ENCODE measurements at regions of chr12 and their contacts with region 1.

Region 1: GRCh38 chr12:9634177-9634803 is 26.6 kb upstream of the KLRB1 start:
- DNase-seq: peak; percentile 87
- H3K4me3 Mint-ChIP-seq: no peak overlapping the region
- H3K27ac Mint-ChIP-seq: peak overlapping the region; percentile 4
- H3K4me1 Mint-ChIP-seq: peaks cover 66% of the 10 kb centered on the region
- H3K27me3 Mint-ChIP-seq: peaks cover 4% of the 10 kb centered on the region

Region 2: DNA sequence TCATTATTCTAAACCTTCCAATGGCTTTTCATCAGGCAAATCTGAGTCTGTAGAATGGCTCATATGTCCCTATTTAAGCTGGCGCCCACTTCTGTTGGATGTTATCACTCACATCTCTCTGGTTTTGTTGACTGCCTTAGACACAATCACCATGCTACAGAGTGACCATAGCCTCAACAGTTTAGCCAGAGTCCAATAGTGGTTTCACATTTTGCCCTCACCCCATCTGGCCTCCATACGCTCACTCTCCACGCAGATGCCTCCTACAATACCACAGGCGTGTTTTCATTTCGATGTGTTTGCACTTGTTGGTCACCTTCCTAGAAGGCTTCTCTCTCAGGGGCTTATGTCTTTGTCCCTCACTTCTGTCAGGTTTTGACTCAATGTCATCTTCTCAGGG is 30.0 kb before region 1 on chr12:
- CTCF ChIA-PET with region 1: no interaction called
- DNase-seq: no peak
- H3K4me3 Mint-ChIP-seq: no peak overlapping the region
- H3K27ac Mint-ChIP-seq: no peak overlapping the region
- H3K4me1 Mint-ChIP-seq: peaks cover 12% of the 10 kb centered on the region
- H3K27me3 Mint-ChIP-seq: peaks cover 4% of the 10 kb centered on the region

Region 3: DNA sequence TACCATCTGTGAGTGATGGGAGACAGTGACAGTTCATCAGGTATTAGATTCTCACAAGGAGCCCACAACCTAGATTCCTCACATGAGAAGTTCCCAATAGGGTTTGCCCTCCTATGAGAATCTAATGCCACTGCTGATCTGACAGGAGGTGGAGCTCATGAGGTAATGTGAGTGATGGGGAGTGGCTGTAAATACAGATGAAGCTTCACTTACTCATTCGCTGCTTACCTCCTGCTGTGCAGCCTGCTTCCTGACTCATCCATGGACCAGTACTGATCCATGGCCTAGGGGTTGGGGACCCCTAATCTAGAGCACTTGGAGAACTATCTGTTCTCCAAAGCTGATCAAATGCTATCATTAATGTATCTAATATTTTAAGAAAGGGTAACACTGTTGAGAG is 52.9 kb after region 1 on chr12:
- CTCF ChIA-PET with region 1: interaction called, 11 read pairs
- DNase-seq: no peak
- H3K4me3 Mint-ChIP-seq: no peak overlapping the region
- H3K27ac Mint-ChIP-seq: peak overlapping the region; percentile 55
- H3K4me1 Mint-ChIP-seq: peaks cover 87% of the 10 kb centered on the region
- H3K27me3 Mint-ChIP-seq: no peaks in the 10 kb centered on the region

Measured in activated naive CD4-positive, alpha-beta T cell treated with anti-CD3 and anti-CD28 coated beads, Interleukin-2, amount 10 ng/mL, durations not matched to agents 7 days and 5 days (primary cell).